Sciatic nerve (tissue), 2 donors: ENCODE measurements at regions of chr1 and their contacts with region 1.

Region 1: DNA sequence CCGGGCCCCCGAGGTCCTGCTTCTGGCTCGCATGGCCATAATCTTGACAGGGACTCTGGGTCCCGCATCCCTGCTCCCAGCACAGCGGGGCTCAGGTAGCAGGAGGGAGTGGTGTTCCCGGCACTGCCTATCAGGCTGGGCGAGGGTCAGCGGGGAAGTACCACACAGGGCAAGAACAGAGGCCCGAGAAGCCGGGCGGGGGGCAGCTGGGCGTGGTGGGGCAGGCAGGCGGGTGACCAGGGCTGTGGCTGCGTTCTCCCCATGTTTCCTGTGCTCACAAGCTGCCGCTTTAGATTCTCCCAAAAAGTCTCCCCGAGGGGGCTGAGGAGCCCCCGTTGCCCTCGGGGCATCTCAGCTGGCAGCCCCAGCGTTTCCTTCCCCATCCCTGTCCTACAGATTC is 18.3 kb downstream of the ATAD3B start:
- DNase-seq: no peak
- ATAC-seq: no peak

Region 2: GRCh38 chr1:1399187-1399871 is 90.5 kb before region 1 on chr1 and contains the start of gene CCNL2:
- intact Hi-C with region 1: loop called (anchors 10 kb)
- DNase-seq: peak; percentile 100
- ATAC-seq: peak; percentile 99
- total RNA-seq, gene CCNL2: 207 TPM

Region 3: DNA sequence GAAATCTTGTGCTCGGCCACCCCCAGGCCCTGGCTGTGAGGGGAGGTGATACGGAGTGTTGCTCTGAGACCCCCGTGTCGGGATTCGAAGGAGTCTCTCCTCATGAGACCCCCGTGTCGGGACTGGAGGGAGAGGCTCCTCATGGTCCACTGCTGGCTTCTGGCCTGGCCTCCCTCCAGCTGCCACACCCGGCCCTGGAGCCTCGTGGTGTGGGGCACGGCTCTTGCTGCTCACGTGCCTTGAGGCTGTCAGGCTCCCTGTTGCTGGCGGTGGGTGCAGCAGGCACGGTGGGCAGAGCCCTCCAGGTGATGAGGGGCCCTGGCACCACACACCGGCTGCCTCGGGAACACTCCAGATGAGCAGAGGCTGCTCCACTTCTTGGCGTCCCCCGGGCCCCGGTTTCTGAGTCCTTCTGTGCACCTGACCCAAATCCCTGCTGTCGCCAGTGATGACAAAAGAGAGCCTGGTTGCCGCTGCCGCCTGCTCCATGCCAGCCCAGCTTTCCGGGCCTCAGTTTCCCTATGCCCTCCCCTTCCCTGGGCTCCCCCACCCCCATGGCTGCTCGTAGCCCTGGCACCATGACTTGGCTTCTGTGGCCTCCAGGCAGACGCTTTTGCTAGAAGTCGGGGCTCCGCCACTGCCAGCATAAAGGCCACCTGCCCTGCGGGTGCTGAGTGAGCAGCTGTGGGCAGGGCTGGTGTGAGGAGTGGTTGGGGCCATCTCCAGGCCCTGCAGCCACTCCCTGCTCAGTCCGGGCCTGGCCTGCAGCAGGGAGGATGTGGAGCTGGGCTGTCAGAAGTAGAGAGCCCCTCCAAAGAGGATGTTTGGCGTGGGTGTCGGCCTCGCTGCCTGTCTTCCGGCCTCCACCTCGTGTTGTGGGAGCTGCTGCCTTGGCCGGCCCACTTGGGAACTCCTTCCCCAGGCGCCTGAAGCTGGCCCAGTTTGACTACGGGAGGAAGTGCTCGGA is 38.7 kb after region 1 on chr1:
- intact Hi-C with region 1: no loop called
- DNase-seq: no peak
- ATAC-seq: no peak